PC-9 (cell line): ENCODE measurements at regions of chr3 and their contacts with region 1.

Region 1: DNA sequence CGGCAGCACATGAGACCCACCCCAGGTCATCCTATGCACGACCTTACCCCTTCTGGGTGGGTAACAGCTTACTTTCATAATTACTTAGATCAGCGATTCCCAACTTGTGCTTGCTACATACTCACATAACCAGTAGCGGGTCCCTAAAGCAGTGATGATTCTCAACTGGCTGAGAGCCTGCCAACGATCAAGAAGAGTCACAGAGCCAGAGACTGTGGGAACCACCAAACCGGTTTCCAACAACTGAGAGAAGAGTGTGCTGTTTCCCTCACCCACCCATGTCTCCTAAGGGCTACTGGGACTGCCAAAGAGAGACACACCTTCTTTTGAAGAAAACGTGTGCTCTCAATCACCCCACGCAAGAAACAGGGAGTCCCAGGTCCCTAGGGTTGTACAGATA is 12.0 kb upstream of the XXYLT1 start:
- DNase-seq: peak in 1 of 2 experiments; percentile 21
- H3K4me3 ChIP-seq: no peak overlapping the region
- H3K27ac ChIP-seq: no peak overlapping the region
- H3K4me1 ChIP-seq: no peaks in the 10 kb centered on the region; the same call in 1 of the 2 replicates
- H3K27me3 ChIP-seq: no peaks in the 10 kb centered on the region
- CTCF ChIP-seq: no peak

Region 2: DNA sequence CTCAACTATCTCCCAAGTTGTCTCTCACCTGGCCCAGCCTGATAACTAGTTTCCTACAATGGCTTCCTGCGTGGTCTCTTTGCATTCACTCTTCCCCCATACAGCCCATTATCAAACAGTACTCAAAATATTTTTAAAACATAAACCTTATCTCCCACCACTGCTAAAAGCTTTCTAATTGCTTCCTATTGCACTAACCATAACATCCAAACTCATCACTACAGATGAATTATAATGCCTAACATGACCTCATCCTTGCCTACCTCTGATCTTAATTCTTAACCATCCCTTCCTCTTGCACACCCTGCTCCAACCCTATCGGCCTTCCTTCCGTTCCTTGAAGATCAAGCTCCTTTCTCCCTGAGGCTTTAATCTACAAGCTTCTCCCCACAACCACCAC is 142.9 kb after region 1 on chr3:
- CTCF ChIA-PET with region 1: no interaction called
- POLR2A ChIA-PET with region 1: no interaction called
- intact Hi-C with region 1: no loop called
- DNase-seq: no peak
- H3K4me3 ChIP-seq: no peak overlapping the region
- H3K27ac ChIP-seq: no peak overlapping the region
- H3K4me1 ChIP-seq: no peaks in the 10 kb centered on the region
- H3K27me3 ChIP-seq: no peaks in the 10 kb centered on the region
- CTCF ChIP-seq: no peak

Region 3: GRCh38 chr3:195886181-195887141 is 603.5 kb after region 1 on chr3:
- CTCF ChIA-PET with region 1: interaction called, 10 read pairs
- POLR2A ChIA-PET with region 1: no interaction called
- intact Hi-C with region 1: no loop called
- DNase-seq: no peak
- H3K4me3 ChIP-seq: no peak overlapping the region
- H3K27ac ChIP-seq: no peak overlapping the region
- H3K4me1 ChIP-seq: no peaks in the 10 kb centered on the region
- H3K27me3 ChIP-seq: no peaks in the 10 kb centered on the region
- CTCF ChIP-seq: no peak